ENCODE measurements at regions of chr12 and their contacts with region 1.

Region 1: GRCh38 chr12:65182012-65182739 is 12.8 kb downstream of the LEMD3 start:
- DNase-seq: no peak
- ATAC-seq: no peak
- H3K4me3 Mint-ChIP-seq: no peak overlapping the region
- H3K27ac Mint-ChIP-seq: no peak overlapping the region
- H3K4me1 Mint-ChIP-seq: peaks cover 62% of the 10 kb centered on the region
- H3K27me3 Mint-ChIP-seq: no peaks in the 10 kb centered on the region
- CTCF ChIP-seq: no peak

Region 2: DNA sequence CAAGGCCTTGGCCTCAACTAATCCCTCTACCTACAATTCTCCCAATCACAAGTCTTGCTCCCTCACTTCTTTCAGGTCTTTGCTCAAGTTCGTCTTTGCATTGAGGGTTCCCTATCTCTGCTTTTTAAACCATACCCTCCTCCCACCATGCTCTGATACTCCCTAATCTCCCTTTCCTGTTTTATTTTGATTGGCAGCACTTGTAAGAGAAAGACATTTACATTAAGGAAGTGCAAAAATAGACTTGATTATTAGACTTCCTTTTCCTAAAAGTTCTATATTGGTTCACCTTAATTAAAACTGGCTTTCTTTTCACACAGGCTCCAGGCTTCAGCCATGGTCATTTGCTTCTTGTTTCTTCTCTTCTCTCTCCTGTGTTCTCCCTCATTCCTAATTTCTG is 42.8 kb before region 1 on chr12:
- CTCF ChIA-PET with region 1: no interaction called
- POLR2A ChIA-PET with region 1: no interaction called
- intact Hi-C with region 1: no loop called
- DNase-seq: no peak
- ATAC-seq: no peak
- H3K4me3 Mint-ChIP-seq: no peak overlapping the region
- H3K27ac Mint-ChIP-seq: no peak overlapping the region
- H3K4me1 Mint-ChIP-seq: peaks cover 9% of the 10 kb centered on the region
- H3K27me3 Mint-ChIP-seq: peaks cover 3% of the 10 kb centered on the region
- CTCF ChIP-seq: no peak

Region 3: GRCh38 chr12:65156366-65156841 is 25.8 kb before region 1 on chr12:
- CTCF ChIA-PET with region 1: no interaction called
- POLR2A ChIA-PET with region 1: no interaction called
- intact Hi-C with region 1: no loop called
- DNase-seq: no peak
- ATAC-seq: peak; percentile 76
- H3K4me3 Mint-ChIP-seq: peak overlapping the region; percentile 54
- H3K27ac Mint-ChIP-seq: peak overlapping the region; percentile 71
- H3K4me1 Mint-ChIP-seq: peaks cover 14% of the 10 kb centered on the region
- H3K27me3 Mint-ChIP-seq: peaks cover 2% of the 10 kb centered on the region
- CTCF ChIP-seq: no peak

Region 4: DNA sequence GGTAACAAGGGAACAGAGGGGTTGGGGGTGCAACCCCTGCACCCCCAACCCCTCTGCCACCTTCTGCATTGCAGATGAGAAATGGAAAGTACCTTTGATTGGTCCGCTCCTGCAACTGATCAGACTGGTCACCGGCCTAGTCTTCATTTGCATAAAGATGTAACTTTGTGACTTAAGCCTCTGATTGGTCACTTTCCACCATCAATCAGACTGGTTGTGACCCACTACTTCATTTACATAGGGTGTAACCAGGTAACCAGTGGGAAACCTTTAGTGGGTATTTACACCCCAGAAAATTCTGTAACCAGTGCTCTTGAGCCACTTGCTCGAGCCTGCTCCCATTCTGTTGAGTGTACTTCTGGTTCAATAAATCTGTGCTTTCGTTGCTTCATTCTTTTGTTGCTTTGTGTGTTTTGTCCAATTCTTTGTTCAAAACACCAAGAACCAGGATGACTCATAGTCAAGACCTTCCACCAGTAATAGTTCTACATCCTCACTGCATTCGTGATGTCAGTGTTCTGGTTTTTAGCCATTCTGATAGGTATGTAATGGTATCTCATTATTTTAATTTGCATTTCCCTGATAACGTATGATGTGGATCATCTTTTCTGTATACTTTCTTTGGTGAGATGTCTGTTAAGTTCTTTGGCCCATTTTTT is 18.0 kb after region 1 on chr12:
- CTCF ChIA-PET with region 1: interaction called, 3 read pairs
- POLR2A ChIA-PET with region 1: no interaction called
- intact Hi-C with region 1: loop called (anchors 2 kb)
- DNase-seq: no peak
- ATAC-seq: no peak
- H3K4me3 Mint-ChIP-seq: no peak overlapping the region
- H3K27ac Mint-ChIP-seq: no peak overlapping the region
- H3K4me1 Mint-ChIP-seq: peaks cover 79% of the 10 kb centered on the region
- H3K27me3 Mint-ChIP-seq: no peaks in the 10 kb centered on the region
- CTCF ChIP-seq: no peak

Measured in activated B cell treated with CpG ODN at 0.5 μM for 24 hours (primary cell).